ENCODE measurements at regions of chr10 and their contacts with region 1.

Region 1: GRCh38 chr10:104642658-104643302 is 1.7 kb downstream of the SORCS3 start:
- DNase-seq: peak; percentile 69

Region 2: DNA sequence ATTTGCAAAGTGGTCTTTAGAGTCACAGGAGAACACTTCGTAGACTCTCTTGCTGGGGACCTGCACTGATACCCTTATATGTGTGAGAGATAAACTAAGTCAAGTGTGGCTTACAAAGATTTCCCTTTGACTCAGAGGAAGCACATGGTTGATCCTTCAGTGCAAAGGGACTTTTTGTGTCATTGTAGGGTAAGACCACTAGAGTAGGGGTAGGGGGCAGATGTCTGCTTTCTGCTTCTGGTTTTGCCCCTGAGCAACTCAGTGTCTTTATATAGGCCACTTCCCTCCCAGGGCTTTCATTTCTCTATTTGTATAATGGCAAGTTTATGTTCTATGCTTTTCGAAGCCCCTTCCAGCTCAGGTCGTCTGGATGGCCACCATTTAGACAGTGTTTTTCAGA is 280.0 kb after region 1 on chr10:
- in situ Hi-C with region 1: loop called (anchors 25 kb)
- DNase-seq: no peak

Measured in SK-MEL-5 (cell line).